ENCODE measurements at regions of chr1 and their contacts with region 1.

Region 1: GRCh38 chr1:204213668-204214662 is at the start of gene GOLT1A:
- DNase-seq: peak; percentile 91 to 93
- H3K4me3 ChIP-seq: peak within 1 kb of the TSS; percentile 58
- H3K27ac ChIP-seq: no peak within 1 kb of the TSS
- H3K4me1 ChIP-seq: peaks cover 17% of the 10 kb centered on the region
- H3K27me3 ChIP-seq: no peaks in the 10 kb centered on the region
- CTCF ChIP-seq: peak; percentile 82
- total RNA-seq, gene GOLT1A: 18.7 and 22.8 TPM in 2 replicates

Region 2: GRCh38 chr1:203839059-203839458 is 374.9 kb before region 1 on chr1:
- CTCF ChIA-PET with region 1: no interaction called
- POLR2A ChIA-PET with region 1: no interaction called
- intact Hi-C with region 1: no loop called
- DNase-seq: no peak
- H3K4me3 ChIP-seq: no peak overlapping the region
- H3K27ac ChIP-seq: no peak overlapping the region
- H3K4me1 ChIP-seq: no peaks in the 10 kb centered on the region
- H3K27me3 ChIP-seq: no peaks in the 10 kb centered on the region
- CTCF ChIP-seq: no peak

Region 3: GRCh38 chr1:204198151-204198994 is 15.6 kb before region 1 on chr1:
- CTCF ChIA-PET with region 1: no interaction called
- POLR2A ChIA-PET with region 1: interaction called, 11 read pairs
- intact Hi-C with region 1: no loop called
- DNase-seq: peak; percentile 90 to 95
- H3K4me3 ChIP-seq: peak overlapping the region; percentile 32; the same call in 1 of the 2 replicates
- H3K27ac ChIP-seq: peak overlapping the region; percentile 82
- H3K4me1 ChIP-seq: peaks cover 44% of the 10 kb centered on the region
- H3K27me3 ChIP-seq: no peaks in the 10 kb centered on the region
- CTCF ChIP-seq: peak; percentile 54

Region 4: DNA sequence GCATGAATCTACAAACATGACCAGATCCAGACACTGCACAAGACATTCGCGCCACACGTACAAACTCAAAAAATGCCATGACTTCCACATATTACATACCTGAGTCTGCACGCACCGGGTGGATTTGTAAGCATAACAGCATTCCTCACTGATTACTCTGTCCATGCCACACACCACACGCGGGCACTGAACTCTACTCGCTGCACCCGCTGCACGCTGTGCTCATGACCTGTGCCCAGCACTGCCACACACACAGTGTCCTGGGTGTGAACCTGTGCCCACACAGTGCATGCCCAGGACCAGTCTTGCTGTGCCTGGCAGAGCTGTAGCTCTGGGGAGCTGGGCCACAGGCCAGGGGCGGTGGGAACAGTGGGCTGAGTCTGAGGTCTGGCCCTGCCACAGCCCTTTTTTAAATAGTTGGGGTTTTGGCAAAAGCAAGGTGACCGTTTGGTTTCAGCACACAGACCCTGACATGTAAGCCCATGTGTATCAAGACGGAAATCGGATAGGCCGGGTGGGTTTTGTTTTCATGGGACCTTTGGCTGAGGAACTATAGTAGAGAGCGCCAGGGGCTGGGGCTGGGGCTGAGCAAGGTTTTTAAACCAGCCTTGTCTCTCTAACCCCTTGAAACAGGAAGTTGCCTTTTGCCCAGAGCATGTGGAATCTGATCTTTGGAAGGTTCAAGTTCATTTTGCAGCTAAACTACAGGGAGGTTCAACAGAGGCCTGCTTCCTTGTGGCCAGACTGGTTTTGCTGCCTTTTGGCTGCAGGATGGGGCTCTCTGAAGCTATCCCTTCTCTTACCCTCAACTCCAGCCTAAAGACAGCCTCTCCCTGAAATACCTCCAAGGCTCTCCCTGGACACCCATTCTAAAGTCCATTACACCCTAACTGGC is 12.1 kb after region 1 on chr1:
- CTCF ChIA-PET with region 1: no interaction called
- POLR2A ChIA-PET with region 1: no interaction called
- intact Hi-C with region 1: loop called (anchors 1 kb)
- DNase-seq: peak; percentile 74 to 90
- H3K4me3 ChIP-seq: peak overlapping the region; percentile 27; the same call in 1 of the 2 replicates
- H3K27ac ChIP-seq: peak overlapping the region; percentile 82
- H3K4me1 ChIP-seq: peaks cover 37% of the 10 kb centered on the region
- H3K27me3 ChIP-seq: no peaks in the 10 kb centered on the region
- CTCF ChIP-seq: no peak

Region 5: GRCh38 chr1:204257954-204258752 is 44.2 kb after region 1 on chr1:
- CTCF ChIA-PET with region 1: interaction called, 13 read pairs
- POLR2A ChIA-PET with region 1: no interaction called
- intact Hi-C with region 1: no loop called
- DNase-seq: peak in 1 of 2 experiments; percentile 52
- H3K4me3 ChIP-seq: no peak overlapping the region
- H3K27ac ChIP-seq: no peak overlapping the region
- H3K4me1 ChIP-seq: peaks cover 29% of the 10 kb centered on the region
- H3K27me3 ChIP-seq: no peaks in the 10 kb centered on the region
- CTCF ChIP-seq: peak; percentile 75

Region 6: DNA sequence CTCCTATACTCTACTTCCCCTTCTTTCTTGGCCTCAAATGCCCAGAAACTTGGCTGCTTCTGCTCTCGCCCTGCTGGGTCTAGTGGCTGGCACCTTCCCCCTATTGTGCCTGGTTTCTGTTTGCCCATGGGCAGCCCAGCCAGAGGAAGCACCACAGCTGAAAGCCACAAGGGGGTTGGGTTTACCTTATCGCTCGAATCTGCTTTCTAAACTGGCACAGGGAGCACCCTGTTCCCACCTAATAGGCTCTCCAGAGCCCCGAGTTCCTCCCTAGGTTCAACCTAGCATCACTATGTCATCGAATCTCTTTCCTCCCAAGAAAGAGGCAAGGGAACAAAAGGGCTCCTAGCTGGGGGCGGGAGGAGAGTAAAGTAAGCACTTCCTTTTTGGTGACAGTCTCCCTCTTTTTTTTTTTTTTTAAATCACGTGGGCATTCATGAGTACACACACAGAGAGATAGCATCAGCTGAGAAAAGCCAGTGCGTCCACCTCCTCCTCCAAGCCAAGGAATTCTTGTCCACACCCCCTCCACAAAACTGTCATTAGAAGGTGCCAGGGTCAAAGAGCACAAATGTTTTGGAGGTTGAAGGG is 73.0 kb after region 1 on chr1:
- CTCF ChIA-PET with region 1: no interaction called
- POLR2A ChIA-PET with region 1: no interaction called
- intact Hi-C with region 1: loop called (anchors 5 kb)
- DNase-seq: peak; percentile 72 to 88
- H3K4me3 ChIP-seq: peak overlapping the region; percentile 56
- H3K27ac ChIP-seq: peak overlapping the region; percentile 80
- H3K4me1 ChIP-seq: peaks cover 57% of the 10 kb centered on the region
- H3K27me3 ChIP-seq: no peaks in the 10 kb centered on the region
- CTCF ChIP-seq: no peak

Region 7: GRCh38 chr1:204363335-204364124 is 149.6 kb after region 1 on chr1:
- CTCF ChIA-PET with region 1: interaction called, 13 read pairs
- POLR2A ChIA-PET with region 1: interaction called, 3 read pairs
- intact Hi-C with region 1: loop called (anchors 1 kb)
- DNase-seq: peak; percentile 34 to 54
- H3K4me3 ChIP-seq: no peak overlapping the region
- H3K27ac ChIP-seq: no peak overlapping the region
- H3K4me1 ChIP-seq: 0 out of 2 replicates have a peak, but pooled peaks cover 3% of the 10 kb centered on the region
- H3K27me3 ChIP-seq: no peaks in the 10 kb centered on the region
- CTCF ChIP-seq: peak; percentile 98

Region 8: DNA sequence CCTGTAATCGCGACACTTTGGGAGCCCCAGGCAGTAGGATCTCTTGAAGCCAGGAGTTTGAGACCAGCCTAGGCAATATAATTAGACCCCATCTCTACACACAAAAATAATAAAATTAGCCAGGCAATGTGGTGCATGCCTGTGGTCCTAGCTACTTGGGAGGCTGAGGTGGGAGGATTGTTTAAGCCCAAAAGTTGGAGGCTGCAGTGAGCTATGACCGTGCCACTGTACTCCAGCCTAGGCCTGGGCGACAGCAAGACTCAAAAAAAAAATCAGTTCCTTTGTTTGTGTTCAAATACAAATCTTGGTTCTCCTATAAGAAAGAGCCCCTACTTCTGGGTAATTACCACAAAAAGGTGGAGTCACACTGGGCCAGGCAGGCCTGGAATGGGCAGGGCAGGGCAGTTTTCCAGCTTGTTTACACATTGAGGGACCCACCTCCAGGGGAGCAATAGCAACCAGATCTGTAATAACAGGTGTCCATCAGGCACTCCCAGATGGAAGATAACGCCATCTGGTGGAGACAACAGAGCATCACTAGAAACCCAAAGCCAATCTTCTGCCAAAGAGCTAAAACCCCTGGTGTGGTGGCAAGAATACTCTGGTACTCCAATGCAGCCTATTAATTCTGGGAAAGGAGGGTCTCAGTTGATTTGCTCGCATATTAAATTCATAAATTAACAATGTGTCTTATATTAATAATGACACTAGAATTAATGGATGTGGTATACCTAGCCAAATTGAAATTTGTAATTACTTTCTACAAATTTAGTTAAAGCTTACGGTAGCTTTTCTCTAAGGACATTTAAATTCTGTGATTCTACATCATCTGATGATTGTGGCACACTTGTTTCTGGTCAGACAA is 184.5 kb after region 1 on chr1:
- CTCF ChIA-PET with region 1: interaction called, 12 read pairs
- POLR2A ChIA-PET with region 1: no interaction called
- intact Hi-C with region 1: loop called (anchors 1 kb)
- DNase-seq: peak; percentile 88 to 92
- H3K4me3 ChIP-seq: no peak overlapping the region
- H3K27ac ChIP-seq: no peak overlapping the region
- H3K4me1 ChIP-seq: 0 out of 2 replicates have a peak, but pooled peaks cover 5% of the 10 kb centered on the region
- H3K27me3 ChIP-seq: no peaks in the 10 kb centered on the region
- CTCF ChIP-seq: peak; percentile 87